H1 (cell line): ENCODE measurements at regions of chr1 and their contacts with region 1.

Region 1: GRCh38 chr1:156445789-156446263 is 54.7 kb downstream of the MEF2D start:
- DNase-seq: peak in 1 of 2 experiments; percentile 96
- H3K4me3 ChIP-seq: no peak overlapping the region
- H3K27ac ChIP-seq: no peak overlapping the region
- H3K4me1 ChIP-seq: no peaks in the 10 kb centered on the region; a peak in 4 of 7 replicates
- H3K27me3 ChIP-seq: peaks cover 19 to 39% (median 33%) of the 10 kb centered on the region in 4 experiments
- CTCF ChIP-seq: peak; percentile 95 to 98 (median 96)
- EP300 ChIP-seq: no peak
- POLR2A ChIP-seq: no peak
- RAD21 ChIP-seq: peak; percentile 94 to 98

Region 2: DNA sequence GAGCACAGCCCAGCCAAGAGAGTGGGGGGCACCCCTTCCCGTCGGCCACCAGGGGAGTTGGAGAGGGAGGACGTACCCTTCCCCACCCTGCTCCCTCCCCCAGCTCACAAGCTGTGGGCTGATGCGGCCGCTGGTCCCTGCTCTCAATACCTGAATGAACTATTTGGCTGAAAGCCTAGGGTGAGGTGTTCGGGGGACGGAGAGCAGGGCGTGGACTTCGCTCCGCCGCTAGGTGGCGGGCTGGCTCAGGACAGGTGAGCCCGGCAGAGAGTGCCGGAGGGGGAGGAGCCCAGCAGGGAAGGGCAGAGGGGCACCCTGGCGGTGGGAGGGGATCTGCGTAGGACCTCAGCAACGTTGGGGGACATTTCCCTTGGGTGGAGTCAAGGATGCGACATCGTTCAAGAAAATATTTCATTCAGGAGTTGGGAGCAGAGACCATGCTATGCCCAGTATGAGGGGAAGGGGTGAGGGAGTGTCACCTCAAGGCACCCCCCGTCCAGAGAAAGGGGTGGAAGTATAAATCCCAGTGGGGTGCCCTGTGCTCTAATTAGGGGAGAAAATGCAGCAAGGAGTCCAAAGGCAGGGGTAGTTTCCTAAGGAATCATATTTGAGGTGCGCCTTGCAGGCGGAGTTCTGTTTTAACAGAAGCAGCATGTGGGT is 88.8 kb before region 1 on chr1:
- CTCF ChIA-PET with region 1: interaction called, 18 read pairs
- POLR2A ChIA-PET with region 1: interaction called, 3 read pairs
- DNase-seq: peak; percentile 84 to 92
- H3K4me3 ChIP-seq: peak overlapping the region; percentile 27 to 58 (median 42); a peak in 6 of 8 replicates
- H3K27ac ChIP-seq: no peak overlapping the region
- H3K4me1 ChIP-seq: peaks cover 0 to 4% (median 2%) of the 10 kb centered on the region in 4 experiments; a peak in 3 of 7 replicates
- H3K27me3 ChIP-seq: no peaks in the 10 kb centered on the region; a peak in 1 of 7 replicates
- CTCF ChIP-seq: peak; percentile 95 to 99 (median 95)
- EP300 ChIP-seq: peak in 1 of 2 experiments; percentile 40; a peak in 1 of 3 replicates
- POLR2A ChIP-seq: peak in 1 of 2 experiments; percentile 41; a peak in 1 of 3 replicates
- RAD21 ChIP-seq: peak; percentile 55 to 69

Region 3: GRCh38 chr1:156388174-156389137 is 57.4 kb before region 1 on chr1:
- CTCF ChIA-PET with region 1: interaction called, 574 read pairs
- POLR2A ChIA-PET with region 1: interaction called, 11 read pairs
- DNase-seq: peak in 1 of 2 experiments; percentile 74
- H3K4me3 ChIP-seq: peak overlapping the region; percentile 23 to 59 (median 32)
- H3K27ac ChIP-seq: no peak overlapping the region
- H3K4me1 ChIP-seq: peaks cover 10 to 46% (median 33%) of the 10 kb centered on the region in 4 experiments
- H3K27me3 ChIP-seq: peaks cover 14 to 64% (median 56%) of the 10 kb centered on the region in 4 experiments
- CTCF ChIP-seq: no peak
- EP300 ChIP-seq: no peak
- POLR2A ChIP-seq: no peak
- RAD21 ChIP-seq: no peak

Region 4: DNA sequence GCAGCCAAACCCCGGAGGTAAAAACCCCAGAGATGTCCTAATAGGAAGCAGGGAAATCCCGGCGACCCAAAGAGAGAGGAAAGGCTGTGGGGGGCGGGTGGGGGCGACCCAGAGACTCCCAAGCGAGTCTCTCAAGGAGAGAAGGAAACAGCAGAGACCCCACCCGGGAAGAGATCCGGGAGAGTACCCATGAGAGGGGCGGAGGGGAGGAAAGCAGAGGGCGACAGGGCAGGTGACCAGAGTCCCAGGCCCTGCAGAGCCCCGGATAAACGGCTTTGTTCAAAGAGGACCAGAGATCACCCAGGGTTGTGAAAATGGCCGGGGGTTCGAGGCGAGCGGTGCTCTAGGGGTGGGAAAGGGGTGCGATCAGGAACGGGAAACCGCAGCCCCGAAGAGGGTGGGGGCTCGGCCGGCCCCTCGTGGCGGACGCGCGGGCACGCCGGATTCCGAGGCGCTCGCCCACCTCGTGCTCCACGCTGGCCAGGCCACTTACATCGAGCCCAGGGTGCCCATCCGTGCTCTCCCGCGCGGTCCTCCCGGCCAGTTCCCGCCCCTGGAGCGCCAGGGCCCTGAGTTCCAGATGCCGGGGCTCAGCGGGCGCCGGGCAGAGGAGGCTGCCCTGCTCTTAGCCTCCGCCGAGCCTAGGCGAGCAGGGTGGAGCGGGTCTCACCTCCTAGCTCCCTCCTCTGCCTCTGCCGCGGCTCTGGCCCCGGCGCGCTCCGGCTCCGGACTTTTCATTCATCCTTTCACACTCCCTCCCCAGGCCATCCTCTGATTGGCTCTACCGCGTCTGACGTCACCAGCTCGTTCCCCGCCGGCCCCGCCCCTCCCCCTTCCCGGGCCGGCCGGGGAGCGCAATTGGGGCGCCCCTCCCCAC is 24.5 kb before region 1 on chr1:
- CTCF ChIA-PET with region 1: interaction called, 124 read pairs
- POLR2A ChIA-PET with region 1: interaction called, 10 read pairs
- DNase-seq: peak in 1 of 2 experiments; percentile 93
- H3K4me3 ChIP-seq: peak overlapping the region; percentile 35 to 61 (median 45)
- H3K27ac ChIP-seq: peak overlapping the region; percentile 4; the same call in 1 of the 2 replicates
- H3K4me1 ChIP-seq: peaks cover 10 to 26% (median 16%) of the 10 kb centered on the region in 4 experiments
- H3K27me3 ChIP-seq: peaks cover 43 to 73% (median 65%) of the 10 kb centered on the region in 4 experiments
- CTCF ChIP-seq: no peak
- EP300 ChIP-seq: peak in 1 of 2 experiments; percentile 9; a peak in 1 of 3 replicates
- POLR2A ChIP-seq: peak; percentile 69 to 87
- RAD21 ChIP-seq: no peak

Region 5: GRCh38 chr1:156456622-156457465 is 11.0 kb after region 1 on chr1:
- CTCF ChIA-PET with region 1: interaction called, 25 read pairs
- POLR2A ChIA-PET with region 1: interaction called, 3 read pairs
- DNase-seq: peak; percentile 95 to 98
- H3K4me3 ChIP-seq: peak overlapping the region; percentile 57 to 83 (median 69)
- H3K27ac ChIP-seq: peak overlapping the region; percentile 77
- H3K4me1 ChIP-seq: peaks cover 0 to 5% (median under 1%) of the 10 kb centered on the region in 4 experiments; a peak in 2 of 7 replicates
- H3K27me3 ChIP-seq: no peaks in the 10 kb centered on the region
- CTCF ChIP-seq: no peak
- EP300 ChIP-seq: no peak
- POLR2A ChIP-seq: peak; percentile 47 to 87
- RAD21 ChIP-seq: no peak